ENCODE measurements at regions of chr1 and their contacts with region 1.

Region 1: DNA sequence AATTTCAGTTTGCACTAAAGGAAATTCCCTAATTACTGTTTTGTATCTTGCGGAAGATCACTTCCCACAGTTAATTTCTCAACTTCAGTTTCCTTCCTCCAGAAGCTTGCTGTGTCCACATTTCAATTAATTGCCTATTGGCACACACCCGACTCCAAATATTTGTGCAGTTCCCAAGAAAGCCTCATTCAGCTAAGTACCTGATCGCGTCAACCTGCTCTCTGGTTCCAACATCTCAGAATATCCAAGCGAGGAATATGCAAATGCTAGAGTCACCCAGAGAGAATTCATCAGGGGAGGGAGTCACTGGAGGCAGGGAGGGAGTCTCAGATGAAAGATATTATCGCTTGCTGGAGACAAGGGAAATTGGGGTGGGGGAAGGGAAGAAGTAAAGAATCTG is 351.3 kb downstream of the RRAGC start:
- DNase-seq: no peak
- H3K4me3 ChIP-seq: no peak overlapping the region
- CTCF ChIP-seq: no peak

Region 2: GRCh38 chr1:38464071-38464661 is 44.1 kb before region 1 on chr1:
- in situ Hi-C with region 1: no loop called
- DNase-seq: no peak
- H3K4me3 ChIP-seq: no peak overlapping the region
- CTCF ChIP-seq: no peak

Region 3: GRCh38 chr1:38559161-38559824 is 51.1 kb after region 1 on chr1:
- in situ Hi-C with region 1: loop called (anchors 5 kb)
- DNase-seq: no peak
- H3K4me3 ChIP-seq: no peak overlapping the region
- CTCF ChIP-seq: no peak